CD14-positive monocyte (primary cell): ENCODE measurements at regions of chr1 and their contacts with region 1.

Region 1: DNA sequence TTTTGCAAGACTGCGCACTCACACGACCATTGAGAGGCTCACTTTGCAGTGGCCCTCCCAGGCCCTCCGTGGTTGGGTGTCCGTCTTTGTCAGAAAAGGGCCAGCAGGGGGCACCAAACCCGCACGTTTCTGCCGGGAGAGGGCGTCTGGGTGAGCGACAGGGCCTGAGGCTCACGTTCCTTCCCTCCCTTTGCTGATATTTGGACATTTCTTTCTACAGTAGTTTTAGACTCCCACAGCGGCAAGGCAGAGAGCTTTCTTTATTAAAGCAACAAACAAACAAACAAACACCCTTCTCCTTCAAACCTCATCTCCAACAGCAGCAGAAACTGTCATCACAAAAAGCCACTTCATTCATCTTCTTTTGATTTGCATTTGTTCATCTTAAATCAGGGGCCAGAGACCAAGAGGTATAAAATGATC is 79.2 kb upstream of the WDR26 start:
- DNase-seq: peak; percentile 68 to 71 (median 69)
- H3K4me3 ChIP-seq: no peak overlapping the region
- H3K4me3 Mint-ChIP-seq: no peak overlapping the region
- H3K27ac ChIP-seq: no peak overlapping the region
- H3K27ac Mint-ChIP-seq: no peak overlapping the region
- H3K4me1 ChIP-seq: peaks cover 0 to 6% of the 10 kb centered on the region in 2 donors
- H3K4me1 Mint-ChIP-seq: peaks cover 18% of the 10 kb centered on the region
- H3K27me3 ChIP-seq: no peaks in the 10 kb centered on the region
- H3K27me3 Mint-ChIP-seq: peaks cover 0 to 2% (median 0%) of the 10 kb centered on the region in 3 donors
- CTCF ChIP-seq: peak; percentile 93

Region 2: DNA sequence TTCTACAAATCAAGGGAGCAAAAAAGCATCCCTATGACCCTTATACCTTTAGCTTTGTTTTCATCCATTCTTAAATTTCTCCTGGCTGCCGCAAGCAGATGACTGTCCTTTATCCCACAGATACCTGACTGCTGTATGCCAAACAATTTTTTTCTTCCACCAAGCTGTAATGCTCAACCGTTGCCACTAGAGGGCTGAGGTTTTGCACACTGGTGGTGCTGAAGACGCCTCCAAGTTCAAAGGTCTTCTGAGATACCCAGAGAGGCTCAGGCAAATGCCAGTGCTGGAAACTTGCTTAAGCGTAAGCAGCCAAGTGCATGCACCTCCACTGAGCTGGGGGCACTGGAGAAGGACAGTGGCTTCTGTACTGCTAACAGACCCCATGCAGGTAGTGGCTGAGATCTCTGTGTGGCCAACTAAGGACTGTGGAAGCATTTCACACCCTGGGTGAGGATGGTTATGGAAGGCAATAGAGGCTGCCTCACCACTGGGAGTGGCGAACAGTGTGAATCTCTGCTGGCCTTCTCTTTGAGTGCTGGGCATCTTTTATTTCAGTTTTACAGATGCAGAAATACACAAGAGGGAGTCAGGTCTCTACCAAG is 130.9 kb after region 1 on chr1:
- intact Hi-C with region 1: loop called in 1 of 2 experiments (anchors 10 kb)
- DNase-seq: peak; percentile 15 to 40 (median 18)
- H3K4me3 ChIP-seq: no peak overlapping the region
- H3K4me3 Mint-ChIP-seq: no peak overlapping the region
- H3K27ac ChIP-seq: no peak overlapping the region
- H3K27ac Mint-ChIP-seq: no peak overlapping the region
- H3K4me1 ChIP-seq: no peaks in the 10 kb centered on the region
- H3K4me1 Mint-ChIP-seq: peaks cover 5% of the 10 kb centered on the region
- H3K27me3 ChIP-seq: no peaks in the 10 kb centered on the region
- H3K27me3 Mint-ChIP-seq: peaks cover 7 to 10% (median 7%) of the 10 kb centered on the region in 3 donors
- CTCF ChIP-seq: peak; percentile 84

Region 3: GRCh38 chr1:224707843-224708725 is 194.3 kb after region 1 on chr1:
- intact Hi-C with region 1: no loop called
- DNase-seq: no peak
- H3K4me3 ChIP-seq: no peak overlapping the region
- H3K4me3 Mint-ChIP-seq: no peak overlapping the region
- H3K27ac ChIP-seq: no peak overlapping the region
- H3K27ac Mint-ChIP-seq: no peak overlapping the region
- H3K4me1 ChIP-seq: no peaks in the 10 kb centered on the region
- H3K4me1 Mint-ChIP-seq: no peaks in the 10 kb centered on the region
- H3K27me3 ChIP-seq: no peaks in the 10 kb centered on the region
- H3K27me3 Mint-ChIP-seq: peaks cover 4 to 8% (median 4%) of the 10 kb centered on the region in 3 donors
- CTCF ChIP-seq: no peak